ENCODE measurements at regions of chr1 and their contacts with region 1.

Region 1: GRCh38 chr1:6393400-6394187 is at the start of gene ACOT7:
- DNase-seq: peak; percentile 97
- ATAC-seq: peak; percentile 91
- H3K4me3 Mint-ChIP-seq: peak within 1 kb of the TSS; percentile 83
- H3K27ac Mint-ChIP-seq: peak within 1 kb of the TSS; percentile 95
- H3K4me1 Mint-ChIP-seq: peaks cover 28% of the 10 kb centered on the region
- H3K27me3 Mint-ChIP-seq: no peaks in the 10 kb centered on the region
- total RNA-seq, gene ACOT7: 93.8 to 99.2 TPM

Region 2: DNA sequence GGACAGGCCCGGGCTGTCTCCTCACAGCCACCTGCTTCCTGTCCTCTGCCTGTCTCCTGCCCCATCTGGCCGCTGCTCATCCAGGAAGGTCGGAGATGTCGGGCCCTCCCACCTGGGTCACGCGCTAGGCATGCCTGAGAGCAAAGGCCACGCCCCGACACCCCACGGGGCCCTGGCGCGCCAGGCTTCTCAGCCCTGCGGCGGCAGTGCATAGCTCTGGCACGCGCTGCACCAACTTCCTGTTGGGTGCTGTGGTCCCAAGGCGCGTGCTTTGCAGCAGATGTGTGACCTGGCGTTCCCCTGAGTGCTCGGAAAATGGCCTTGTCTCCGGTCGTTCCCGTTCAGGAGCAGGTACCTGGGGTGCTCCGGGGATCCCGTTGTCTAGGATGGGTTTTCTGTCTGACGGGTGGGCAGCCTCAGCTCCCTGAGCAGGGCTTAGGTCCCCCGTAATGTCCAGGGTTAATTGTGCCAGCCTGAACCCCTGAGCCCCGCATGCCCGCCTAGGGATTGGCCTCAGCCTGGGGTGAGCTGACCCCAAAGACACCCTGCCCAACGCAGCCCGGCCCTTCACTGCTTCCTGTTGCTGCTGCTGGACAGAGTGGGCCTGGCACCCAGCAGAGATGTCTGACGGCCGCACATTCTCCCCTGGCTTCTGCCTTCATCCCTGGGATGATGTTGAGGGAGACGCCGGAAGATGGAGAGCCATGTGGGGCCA is 367.3 kb before region 1 on chr1:
- CTCF ChIA-PET with region 1: no interaction called
- POLR2A ChIA-PET with region 1: no interaction called
- intact Hi-C with region 1: loop called in 1 of 2 experiments (anchors 1 kb)
- DNase-seq: peak; percentile 97
- ATAC-seq: peak; percentile 81
- H3K4me3 Mint-ChIP-seq: peak overlapping the region; percentile 97
- H3K27ac Mint-ChIP-seq: peak overlapping the region; percentile 97
- H3K4me1 Mint-ChIP-seq: peaks cover 40% of the 10 kb centered on the region
- H3K27me3 Mint-ChIP-seq: no peaks in the 10 kb centered on the region

Region 3: DNA sequence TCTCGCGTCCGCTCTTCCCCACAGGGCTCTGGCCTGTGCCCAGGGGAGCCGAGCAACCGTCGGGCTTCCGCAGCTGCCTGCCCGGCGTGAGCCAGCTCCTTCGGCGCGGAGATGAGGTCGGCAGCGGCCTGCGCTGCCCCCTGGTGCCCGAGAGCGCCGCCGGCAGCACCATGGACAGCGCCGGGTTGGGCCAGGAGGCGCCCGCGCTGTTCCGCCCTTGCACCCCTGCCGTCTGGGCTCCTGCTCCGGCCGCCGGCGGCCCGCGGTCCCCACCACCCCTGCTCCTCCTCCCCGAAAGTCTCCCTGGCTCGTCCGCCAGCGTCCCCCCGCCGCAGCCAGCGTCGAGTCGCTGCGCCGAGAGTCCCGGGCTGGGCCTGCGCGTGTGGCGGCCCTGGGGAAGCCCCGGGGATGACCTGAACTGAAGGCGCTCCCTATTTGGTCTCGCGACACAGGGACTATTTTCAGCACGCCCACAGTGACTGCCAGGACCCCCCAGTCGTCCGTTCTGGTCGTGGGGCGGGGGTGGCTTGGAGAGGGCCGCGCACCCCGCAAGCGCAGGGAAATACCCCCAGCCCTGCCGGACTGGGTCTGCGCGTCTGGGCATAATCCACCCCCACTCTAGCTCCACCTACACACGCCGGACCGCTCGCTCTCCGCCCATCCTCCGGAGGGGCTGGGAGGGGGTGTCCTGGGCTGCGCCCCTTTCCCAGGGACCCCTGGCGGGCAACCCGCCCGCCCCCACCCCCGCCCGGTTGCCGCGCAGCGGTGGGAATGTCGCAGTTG is 148.3 kb before region 1 on chr1:
- CTCF ChIA-PET with region 1: interaction called, 16 read pairs
- POLR2A ChIA-PET with region 1: no interaction called
- intact Hi-C with region 1: loop called (anchors 1 to 2 kb)
- DNase-seq: peak; percentile 90
- ATAC-seq: peak; percentile 71
- H3K4me3 Mint-ChIP-seq: no peak overlapping the region
- H3K27ac Mint-ChIP-seq: no peak overlapping the region
- H3K4me1 Mint-ChIP-seq: peaks cover 11% of the 10 kb centered on the region
- H3K27me3 Mint-ChIP-seq: peaks cover 53% of the 10 kb centered on the region

Region 4: DNA sequence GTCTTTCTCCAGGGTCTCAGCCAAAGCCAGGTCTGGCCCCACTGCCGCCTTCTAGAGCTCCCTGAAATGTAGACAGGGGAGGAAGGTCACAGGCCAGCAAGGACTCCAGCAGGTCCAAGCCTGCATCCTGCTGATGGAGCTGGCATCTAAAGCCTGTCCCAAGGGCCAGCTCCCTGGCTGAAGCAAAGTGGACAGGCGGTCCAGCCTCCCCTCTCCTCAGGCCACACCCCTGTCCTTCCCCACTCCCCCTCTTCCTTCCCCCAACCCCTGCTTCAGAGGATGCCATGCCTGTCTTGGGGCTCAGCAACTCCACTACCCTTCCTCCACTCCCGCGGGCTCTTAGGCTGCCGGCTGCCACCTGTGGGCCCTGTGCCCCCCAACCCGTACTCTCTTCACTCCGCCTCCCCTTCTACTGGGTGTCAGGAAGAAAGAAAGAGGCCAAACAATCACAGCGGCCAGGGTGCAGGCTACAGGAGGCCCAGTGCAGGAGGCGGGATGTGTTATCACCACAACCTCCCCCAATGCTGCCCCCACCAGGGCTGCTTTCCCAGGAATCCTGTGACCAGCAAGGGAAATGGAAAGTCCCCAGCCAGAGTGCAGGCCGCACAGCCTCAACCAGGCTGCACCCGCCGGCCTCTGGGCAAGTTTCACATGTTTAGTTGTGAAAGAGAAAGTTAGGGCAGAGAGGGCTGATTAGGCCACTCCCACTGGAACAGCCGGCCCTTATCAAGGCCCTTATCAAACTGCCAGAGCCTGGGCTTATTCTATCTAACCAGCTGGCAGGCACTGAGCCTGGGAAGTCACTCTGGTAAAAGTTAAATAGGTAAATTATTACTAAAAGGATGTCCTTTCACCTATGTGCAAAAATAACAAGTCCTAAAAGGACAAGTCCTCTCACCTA is 34.1 kb before region 1 on chr1:
- CTCF ChIA-PET with region 1: interaction called, 5 read pairs
- POLR2A ChIA-PET with region 1: interaction called, 4 read pairs
- intact Hi-C with region 1: loop called (anchors 1 to 2 kb)
- DNase-seq: peak; percentile 76
- ATAC-seq: peak; percentile 83
- H3K4me3 Mint-ChIP-seq: peak overlapping the region; percentile 57
- H3K27ac Mint-ChIP-seq: peak overlapping the region; percentile 86
- H3K4me1 Mint-ChIP-seq: peaks cover 55% of the 10 kb centered on the region
- H3K27me3 Mint-ChIP-seq: no peaks in the 10 kb centered on the region

Region 5: GRCh38 chr1:6378096-6378746 is 15.4 kb before region 1 on chr1:
- CTCF ChIA-PET with region 1: no interaction called
- POLR2A ChIA-PET with region 1: no interaction called
- intact Hi-C with region 1: no loop called
- DNase-seq: peak; percentile 26
- ATAC-seq: no peak
- H3K4me3 Mint-ChIP-seq: no peak overlapping the region
- H3K27ac Mint-ChIP-seq: no peak overlapping the region
- H3K4me1 Mint-ChIP-seq: no peaks in the 10 kb centered on the region
- H3K27me3 Mint-ChIP-seq: no peaks in the 10 kb centered on the region

Region 6: GRCh38 chr1:6464514-6464836 is 70.9 kb after region 1 on chr1:
- CTCF ChIA-PET with region 1: no interaction called
- POLR2A ChIA-PET with region 1: no interaction called
- intact Hi-C with region 1: loop called in 1 of 2 experiments (anchors 1 kb)
- DNase-seq: peak; percentile 80
- ATAC-seq: peak; percentile 21
- H3K4me3 Mint-ChIP-seq: peak overlapping the region; percentile 84
- H3K27ac Mint-ChIP-seq: peak overlapping the region; percentile 83
- H3K4me1 Mint-ChIP-seq: peaks cover 50% of the 10 kb centered on the region
- H3K27me3 Mint-ChIP-seq: no peaks in the 10 kb centered on the region

Region 7: DNA sequence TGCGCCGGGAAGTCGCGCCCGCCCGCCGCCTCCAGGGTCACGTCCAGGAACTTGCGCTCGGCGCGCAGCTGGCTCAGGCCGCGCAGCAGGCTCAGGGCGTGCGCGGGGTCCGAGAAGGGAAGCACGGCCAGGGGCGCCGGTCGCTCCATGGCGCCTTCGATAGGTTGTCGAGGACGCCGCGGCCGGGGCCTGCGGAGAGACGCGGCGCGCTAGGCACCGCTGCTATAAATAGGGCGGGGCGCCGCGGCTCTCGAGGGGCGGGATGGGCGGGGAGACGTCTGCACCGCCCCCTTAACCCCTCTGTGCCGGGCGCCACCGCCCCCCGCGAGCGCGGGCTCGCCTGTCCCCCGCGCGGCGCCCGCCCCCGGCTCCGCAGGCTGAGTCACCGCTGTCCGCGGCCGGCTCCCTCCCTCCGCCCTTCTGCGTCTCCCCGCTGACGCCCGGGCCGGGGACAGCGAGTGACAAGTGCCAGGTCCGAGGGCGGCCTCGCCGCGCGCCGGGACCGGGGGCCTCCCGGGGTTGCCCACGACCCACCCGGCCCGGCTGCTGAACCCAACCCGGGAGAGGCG is 209.2 kb after region 1 on chr1 and contains the start of gene KLHL21:
- CTCF ChIA-PET with region 1: no interaction called
- POLR2A ChIA-PET with region 1: interaction called, 3 read pairs
- intact Hi-C with region 1: loop called in 1 of 2 experiments (anchors 1 kb)
- DNase-seq: peak; percentile 93
- ATAC-seq: peak; percentile 45
- H3K4me3 Mint-ChIP-seq: peak within 1 kb of the TSS; percentile 97
- H3K27ac Mint-ChIP-seq: peak within 1 kb of the TSS; percentile 95
- H3K4me1 Mint-ChIP-seq: peaks cover 30% of the 10 kb centered on the region
- H3K27me3 Mint-ChIP-seq: no peaks in the 10 kb centered on the region
- total RNA-seq, gene KLHL21: 12.4 to 15.7 TPM